ENCODE measurements at regions of chr18 and their contacts with region 1.

Region 1: DNA sequence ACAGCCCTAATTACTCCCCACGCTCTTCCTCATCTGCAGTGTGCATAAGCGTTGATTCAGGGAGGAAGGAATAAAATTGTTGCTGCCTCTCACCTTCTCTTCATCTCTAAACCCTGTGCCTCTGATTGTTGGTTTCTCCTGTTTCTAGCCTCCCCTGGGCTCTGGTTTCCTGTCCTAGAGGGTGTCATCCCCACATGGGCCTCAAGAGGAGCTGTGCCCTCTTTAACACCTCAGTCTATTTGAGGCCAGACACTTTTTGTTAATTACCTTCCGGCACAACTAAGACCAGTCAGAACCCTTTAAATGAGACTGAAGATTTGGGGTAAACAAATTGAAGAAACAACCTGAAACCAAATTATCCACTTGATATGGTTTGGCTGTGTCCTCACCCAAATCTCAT is 9.7 kb downstream of the CTAGE1 start:
- DNase-seq: no peak
- ATAC-seq: no peak
- H3K4me3 ChIP-seq: no peak overlapping the region
- H3K27ac ChIP-seq: no peak overlapping the region
- H3K4me1 ChIP-seq: peaks cover 0 to 7% (median 0%) of the 10 kb centered on the region in 12 donors
- H3K27me3 ChIP-seq: no peaks in the 10 kb centered on the region
- CTCF ChIP-seq: peak in 2 of 12 donors; percentile 4 to 5
- POLR2A ChIP-seq: no peak

Region 2: GRCh38 chr18:22427822-22428549 is 19.9 kb after region 1 on chr18:
- intact Hi-C with region 1: loop called in 1 of 10 experiments (anchors 2 kb)
- DNase-seq: no peak
- ATAC-seq: no peak
- H3K4me3 ChIP-seq: no peak overlapping the region
- H3K27ac ChIP-seq: peak overlapping the region in 2 of 12 donors; percentile 21 to 55
- H3K4me1 ChIP-seq: peaks cover 0 to 32% (median 6%) of the 10 kb centered on the region in 12 donors
- H3K27me3 ChIP-seq: no peaks in the 10 kb centered on the region
- CTCF ChIP-seq: no peak
- POLR2A ChIP-seq: no peak

Region 3: GRCh38 chr18:22609642-22610041 is 201.6 kb after region 1 on chr18:
- intact Hi-C with region 1: no loop called
- DNase-seq: peak; percentile 67 to 79 (median 76)
- ATAC-seq: peak; percentile 25 to 60 (median 49)
- H3K4me3 ChIP-seq: no peak overlapping the region
- H3K27ac ChIP-seq: peak overlapping the region; percentile 12 to 74 (median 50)
- H3K4me1 ChIP-seq: peaks cover 0 to 58% (median 30%) of the 10 kb centered on the region in 12 donors
- H3K27me3 ChIP-seq: no peaks in the 10 kb centered on the region
- CTCF ChIP-seq: no peak
- POLR2A ChIP-seq: no peak

Measured in heart left ventricle (tissue), 16 donors.